ENCODE measurements at regions of chr20 and their contacts with region 1.

Region 1: GRCh38 chr20:50987592-50988210 is 29.1 kb downstream of the MOCS3 start:
- DNase-seq: peak; percentile 73
- H3K4me3 ChIP-seq: no peak overlapping the region
- H3K27ac ChIP-seq: no peak overlapping the region
- H3K4me1 ChIP-seq: no peaks in the 10 kb centered on the region
- H3K27me3 ChIP-seq: peaks cover 1 to 2% of the 10 kb centered on the region in 2 experiments
- CTCF ChIP-seq: peak; percentile 60 to 82
- POLR2A ChIP-seq: no peak

Region 2: GRCh38 chr20:51014797-51015722 is 27.4 kb after region 1 on chr20:
- CTCF ChIA-PET with region 1: interaction called, 21 read pairs
- POLR2A ChIA-PET with region 1: no interaction called
- dilution Hi-C with region 1: no loop called
- intact Hi-C with region 1: no loop called
- DNase-seq: peak; percentile 49
- H3K4me3 ChIP-seq: no peak overlapping the region
- H3K27ac ChIP-seq: no peak overlapping the region
- H3K4me1 ChIP-seq: no peaks in the 10 kb centered on the region
- H3K27me3 ChIP-seq: peaks cover 3 to 12% of the 10 kb centered on the region in 2 experiments
- CTCF ChIP-seq: peak; percentile 77 to 79
- POLR2A ChIP-seq: no peak

Region 3: DNA sequence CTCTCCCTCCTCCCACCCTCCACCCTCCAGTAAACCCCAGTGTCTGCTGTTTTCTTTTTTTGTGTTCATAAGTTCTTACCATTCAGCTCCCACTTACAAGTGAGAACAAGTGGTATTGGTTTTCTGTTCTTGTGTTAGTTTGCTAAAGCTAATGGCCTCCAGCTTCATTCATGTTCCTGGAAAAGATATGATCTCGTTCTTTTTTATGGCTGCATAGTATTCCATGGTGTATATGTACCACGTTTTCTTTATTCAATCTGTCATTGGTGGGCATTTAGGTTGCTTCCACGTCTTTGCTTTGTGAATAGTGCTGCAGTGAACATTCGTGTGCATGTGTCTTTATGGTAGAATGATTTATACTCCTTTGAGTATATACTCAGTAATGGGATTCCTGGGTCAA is 77.9 kb after region 1 on chr20:
- CTCF ChIA-PET with region 1: no interaction called
- POLR2A ChIA-PET with region 1: no interaction called
- dilution Hi-C with region 1: no loop called
- intact Hi-C with region 1: no loop called
- DNase-seq: no peak
- H3K4me3 ChIP-seq: no peak overlapping the region
- H3K27ac ChIP-seq: no peak overlapping the region
- H3K4me1 ChIP-seq: no peaks in the 10 kb centered on the region
- H3K27me3 ChIP-seq: peaks cover 0 to 5% of the 10 kb centered on the region in 2 experiments
- CTCF ChIP-seq: no peak
- POLR2A ChIP-seq: no peak

Region 4: GRCh38 chr20:51300104-51300503 is 312.4 kb after region 1 on chr20:
- CTCF ChIA-PET with region 1: interaction called, 311 read pairs
- POLR2A ChIA-PET with region 1: no interaction called
- dilution Hi-C with region 1: no loop called
- intact Hi-C with region 1: no loop called
- DNase-seq: no peak
- H3K4me3 ChIP-seq: no peak overlapping the region
- H3K27ac ChIP-seq: no peak overlapping the region
- H3K4me1 ChIP-seq: no peaks in the 10 kb centered on the region
- H3K27me3 ChIP-seq: peaks cover 0 to 2% of the 10 kb centered on the region in 2 experiments
- CTCF ChIP-seq: no peak
- POLR2A ChIP-seq: no peak

Region 5: DNA sequence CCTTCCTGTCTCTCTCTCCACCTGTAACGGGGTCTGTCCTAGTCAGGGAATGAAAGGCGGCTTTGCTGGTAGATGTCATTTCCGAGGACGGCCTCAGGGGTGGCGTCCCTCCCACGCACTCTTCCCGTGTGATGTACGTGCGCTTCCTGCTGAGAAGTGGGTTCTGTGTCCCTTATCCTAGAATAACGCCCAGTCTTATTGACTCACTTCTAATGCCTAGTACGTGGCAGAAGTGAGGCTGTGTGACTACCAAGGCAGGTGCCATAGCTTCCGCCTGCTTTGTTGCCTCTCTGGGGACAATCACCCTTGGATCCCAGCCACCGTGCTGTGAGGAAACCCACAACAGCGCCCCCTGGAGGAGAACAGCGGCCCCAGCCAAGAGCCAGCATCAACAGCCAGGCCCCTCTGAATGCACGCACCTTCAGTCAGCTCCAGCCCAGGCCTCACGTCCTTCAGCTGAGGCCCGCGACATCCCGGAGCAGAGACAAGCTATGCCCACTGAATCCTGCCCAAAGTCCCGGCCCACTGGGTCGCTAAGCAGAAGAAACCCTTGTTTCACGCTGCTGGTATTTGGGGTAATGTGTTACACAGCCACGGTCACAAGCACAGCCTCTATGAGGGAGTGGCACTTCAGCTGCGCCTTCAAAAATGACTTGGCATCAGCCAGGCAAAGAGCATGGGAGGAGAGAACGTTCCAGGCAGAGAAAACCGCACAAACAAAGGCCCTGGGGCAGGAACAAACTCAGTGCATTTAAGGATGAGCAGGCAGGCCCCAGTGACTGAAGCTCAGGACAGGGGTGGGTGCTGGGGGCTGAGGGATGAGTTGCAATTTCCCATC is 330.6 kb after region 1 on chr20:
- CTCF ChIA-PET with region 1: interaction called, 95 read pairs
- POLR2A ChIA-PET with region 1: no interaction called
- dilution Hi-C with region 1: no loop called
- intact Hi-C with region 1: no loop called
- DNase-seq: peak; percentile 12
- H3K4me3 ChIP-seq: no peak overlapping the region
- H3K27ac ChIP-seq: no peak overlapping the region
- H3K4me1 ChIP-seq: no peaks in the 10 kb centered on the region
- H3K27me3 ChIP-seq: no peaks in the 10 kb centered on the region
- CTCF ChIP-seq: peak; percentile 66 to 79
- POLR2A ChIP-seq: no peak

Region 6: GRCh38 chr20:51360451-51361221 is 372.9 kb after region 1 on chr20:
- CTCF ChIA-PET with region 1: interaction called, 18 read pairs
- POLR2A ChIA-PET with region 1: no interaction called
- dilution Hi-C with region 1: no loop called
- intact Hi-C with region 1: no loop called
- DNase-seq: peak; percentile 98
- H3K4me3 ChIP-seq: no peak overlapping the region
- H3K27ac ChIP-seq: peak overlapping the region; percentile 85
- H3K4me1 ChIP-seq: peaks cover 33% of the 10 kb centered on the region
- H3K27me3 ChIP-seq: no peaks in the 10 kb centered on the region
- CTCF ChIP-seq: no peak
- POLR2A ChIP-seq: no peak

Region 7: GRCh38 chr20:51487565-51488268 is 500.0 kb after region 1 on chr20:
- CTCF ChIA-PET with region 1: no interaction called
- POLR2A ChIA-PET with region 1: no interaction called
- dilution Hi-C with region 1: no loop called
- intact Hi-C with region 1: no loop called
- DNase-seq: peak; percentile 50
- H3K4me3 ChIP-seq: no peak overlapping the region
- H3K27ac ChIP-seq: peak overlapping the region; percentile 15
- H3K4me1 ChIP-seq: peaks cover 23% of the 10 kb centered on the region
- H3K27me3 ChIP-seq: no peaks in the 10 kb centered on the region
- CTCF ChIP-seq: no peak
- POLR2A ChIP-seq: no peak

Region 8: GRCh38 chr20:52083627-52084232 is 1096.0 kb after region 1 on chr20:
- CTCF ChIA-PET with region 1: interaction called, 4 read pairs
- POLR2A ChIA-PET with region 1: no interaction called
- dilution Hi-C with region 1: no loop called
- intact Hi-C with region 1: loop called (anchors 1 kb)
- DNase-seq: peak; percentile 75
- H3K4me3 ChIP-seq: no peak overlapping the region
- H3K27ac ChIP-seq: no peak overlapping the region
- H3K4me1 ChIP-seq: no peaks in the 10 kb centered on the region
- H3K27me3 ChIP-seq: no peaks in the 10 kb centered on the region
- CTCF ChIP-seq: peak; percentile 51 to 56
- POLR2A ChIP-seq: no peak

Measured in endothelial cell of umbilical vein (primary cell).